Endothelial cell of umbilical vein (primary cell): ENCODE measurements at regions of chr6 and their contacts with region 1.

Region 1: DNA sequence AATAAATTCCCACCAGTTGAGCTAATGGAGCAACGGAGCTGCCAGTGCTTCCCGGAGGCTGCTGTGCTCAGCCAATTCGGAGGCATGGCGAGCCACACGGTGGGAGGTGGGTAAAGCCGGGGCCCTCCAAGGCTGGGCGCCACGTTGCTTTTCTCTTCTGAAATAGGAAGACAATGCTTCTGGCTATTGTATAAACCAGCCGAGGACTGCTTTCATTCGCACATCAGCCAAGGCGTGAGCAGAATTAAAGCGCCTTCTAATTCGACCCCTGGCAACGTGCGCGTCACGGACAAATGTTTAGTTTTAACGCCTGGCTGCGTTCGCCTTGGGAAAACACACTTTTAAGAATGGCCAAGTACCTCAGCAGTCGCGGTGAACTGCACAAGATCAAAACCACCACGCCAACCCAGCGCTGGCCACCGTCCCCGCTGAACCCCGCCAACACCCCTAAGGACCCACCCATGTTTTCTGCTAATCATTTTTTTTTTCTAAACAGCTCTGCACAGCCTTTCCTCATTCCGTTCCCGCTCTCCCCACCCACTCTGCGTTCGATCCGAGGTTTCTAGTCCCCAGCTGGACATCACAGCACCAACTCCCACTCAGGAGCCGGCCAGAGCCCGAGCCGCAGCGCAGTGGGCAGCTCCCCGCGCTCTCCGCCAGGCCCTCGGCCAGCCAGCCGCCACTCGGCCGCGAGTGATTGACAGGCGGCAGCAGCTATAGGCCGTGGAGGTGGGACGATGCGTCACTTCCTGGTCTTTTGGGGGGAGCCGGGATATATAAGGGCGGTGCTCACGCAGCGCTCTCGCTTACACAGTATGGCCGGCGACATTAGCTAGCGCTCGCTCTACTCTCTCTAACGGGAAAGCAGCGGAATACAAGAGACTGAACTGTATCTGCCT is at the start of gene AMD1:
- DNase-seq: peak; percentile 97
- H3K4me3 ChIP-seq: peak within 1 kb of the TSS; percentile 85 to 92 (median 90)
- H3K27ac ChIP-seq: peak within 1 kb of the TSS; percentile 60
- H3K4me1 ChIP-seq: peaks cover 34% of the 10 kb centered on the region
- H3K27me3 ChIP-seq: peaks cover 0 to 2% of the 10 kb centered on the region in 2 experiments
- CTCF ChIP-seq: no peak
- POLR2A ChIP-seq: peak; percentile 100
- total RNA-seq, gene AMD1: 44.2 and 48.2 TPM in 2 replicates

Region 2: DNA sequence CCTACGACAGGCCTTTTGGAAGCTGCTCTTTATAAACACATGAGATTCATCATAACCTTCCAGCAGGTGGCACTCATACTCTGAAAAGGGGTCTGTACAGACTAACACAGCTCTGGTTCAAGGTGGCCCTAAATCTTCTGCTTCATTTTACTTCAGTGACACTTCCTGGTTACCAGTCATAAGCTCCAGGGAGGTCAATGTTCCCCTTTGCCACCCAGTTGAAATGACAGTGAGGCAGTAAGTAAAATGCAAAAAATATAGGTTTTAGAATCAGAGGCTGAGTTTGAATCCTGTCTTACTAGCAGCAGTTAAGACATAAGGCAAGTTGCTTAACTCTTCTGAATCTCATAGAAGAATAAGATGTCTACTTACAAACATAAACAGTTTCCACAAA is 191.8 kb before region 1 on chr6:
- CTCF ChIA-PET with region 1: interaction called, 23 read pairs
- POLR2A ChIA-PET with region 1: interaction called, 19 read pairs
- dilution Hi-C with region 1: no loop called
- intact Hi-C with region 1: loop called (anchors 1 kb)
- DNase-seq: peak; percentile 84
- H3K4me3 ChIP-seq: no peak overlapping the region
- H3K27ac ChIP-seq: no peak overlapping the region
- H3K4me1 ChIP-seq: peaks cover 6% of the 10 kb centered on the region
- H3K27me3 ChIP-seq: peaks cover 0 to 1% of the 10 kb centered on the region in 2 experiments
- CTCF ChIP-seq: peak; percentile 37 to 54
- POLR2A ChIP-seq: no peak

Region 3: GRCh38 chr6:110853754-110854477 is 20.3 kb before region 1 on chr6:
- CTCF ChIA-PET with region 1: interaction called, 4 read pairs
- POLR2A ChIA-PET with region 1: interaction called, 12 read pairs
- dilution Hi-C with region 1: no loop called
- intact Hi-C with region 1: no loop called
- DNase-seq: no peak
- H3K4me3 ChIP-seq: no peak overlapping the region
- H3K27ac ChIP-seq: no peak overlapping the region
- H3K4me1 ChIP-seq: no peaks in the 10 kb centered on the region
- H3K27me3 ChIP-seq: peaks cover 0 to 7% of the 10 kb centered on the region in 2 experiments
- CTCF ChIP-seq: no peak
- POLR2A ChIP-seq: no peak

Region 4: DNA sequence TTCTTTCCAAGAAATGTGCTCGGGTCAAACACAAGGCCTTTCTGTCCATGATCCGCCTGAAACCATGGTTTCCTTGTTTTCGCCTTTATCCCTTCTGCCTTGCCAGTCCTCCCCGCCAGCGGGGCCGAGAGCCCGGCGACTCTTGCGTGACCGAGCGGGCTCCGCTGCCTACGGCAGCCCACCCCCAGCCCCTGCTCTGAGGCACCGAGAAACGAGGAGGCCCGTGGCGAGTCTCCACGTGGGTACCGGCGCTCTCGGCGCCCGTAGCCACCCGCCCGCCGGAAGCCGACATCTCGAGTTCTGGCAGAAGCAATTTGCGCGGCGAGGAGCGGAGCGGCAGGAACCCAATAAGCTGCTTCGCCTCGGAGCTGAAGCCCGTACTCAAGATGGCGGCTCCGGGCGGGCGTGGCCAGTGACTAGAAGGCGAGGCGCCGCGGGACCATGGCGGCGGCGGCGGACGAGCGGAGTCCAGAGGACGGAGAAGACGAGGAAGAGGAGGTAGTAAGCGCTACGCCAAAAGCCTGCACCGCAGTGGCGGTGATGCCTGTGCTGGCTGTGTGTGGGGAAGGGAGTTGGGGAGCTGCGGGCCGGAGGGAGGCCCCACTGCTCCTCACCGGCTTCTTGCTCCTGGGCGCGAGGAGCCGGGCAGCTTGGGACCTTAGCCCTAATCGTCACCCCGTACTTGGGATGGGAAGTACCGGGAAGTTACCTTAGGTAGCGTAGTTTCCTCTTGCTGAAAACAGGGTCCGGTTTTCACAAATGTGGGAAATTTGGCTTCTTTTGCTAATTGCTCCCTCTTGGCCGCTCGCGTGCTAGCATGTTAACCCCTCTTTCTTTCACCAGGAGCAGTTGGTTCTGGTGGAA is 84.3 kb after region 1 on chr6 and contains the start of gene GTF3C6:
- CTCF ChIA-PET with region 1: interaction called, 8 read pairs
- POLR2A ChIA-PET with region 1: interaction called, 13 read pairs
- dilution Hi-C with region 1: no loop called
- intact Hi-C with region 1: loop called (anchors 1 kb)
- DNase-seq: peak; percentile 93
- H3K4me3 ChIP-seq: peak within 1 kb of the TSS; percentile 76 to 94 (median 86)
- H3K27ac ChIP-seq: peak within 1 kb of the TSS; percentile 94
- H3K4me1 ChIP-seq: peaks cover 6% of the 10 kb centered on the region
- H3K27me3 ChIP-seq: peaks cover 0 to 2% of the 10 kb centered on the region in 2 experiments
- CTCF ChIP-seq: no peak
- POLR2A ChIP-seq: peak; percentile 97
- total RNA-seq, gene GTF3C6: 88.1 and 96.4 TPM in 2 replicates